ENCODE measurements at regions of chr17 and their contacts with region 1.

Region 1: DNA sequence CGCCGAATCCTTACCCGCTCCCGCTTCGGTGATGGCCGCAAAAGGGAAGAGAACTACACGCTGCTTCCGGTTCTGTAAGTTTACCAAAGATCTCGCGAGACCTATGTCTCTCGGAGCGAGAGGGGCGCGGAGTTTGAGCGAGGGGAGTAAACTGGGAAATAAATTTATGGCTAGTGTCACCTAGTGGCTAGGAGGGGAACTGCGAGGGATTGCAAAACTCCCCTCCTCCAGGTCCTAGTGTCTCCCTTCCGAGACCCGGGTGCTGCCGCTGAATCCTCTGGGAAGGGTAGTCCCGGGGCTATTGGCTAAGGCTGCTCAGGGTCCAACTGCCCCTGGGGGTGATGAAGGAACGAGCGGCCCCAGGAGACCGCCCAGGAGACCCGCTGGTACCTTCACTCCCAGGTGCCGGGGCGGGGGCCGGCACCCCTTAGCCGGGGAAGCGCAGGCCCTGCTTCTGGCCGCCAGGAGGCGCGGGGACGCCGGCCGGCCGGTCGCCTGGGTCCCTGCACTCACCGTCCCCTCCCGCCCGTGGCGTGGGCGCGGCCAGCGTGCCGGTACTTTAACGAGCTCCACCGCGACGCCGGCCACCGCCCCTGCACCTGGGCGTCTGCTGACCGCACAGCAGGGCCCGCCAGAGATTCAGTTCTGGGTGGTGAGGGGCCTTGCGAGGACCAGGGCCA is at the start of gene RPL26:
- DNase-seq: peak; percentile 94 to 99
- H3K4me3 ChIP-seq: peak within 1 kb of the TSS; percentile 93 to 95
- H3K27ac ChIP-seq: peak within 1 kb of the TSS; percentile 76 to 81
- H3K4me1 ChIP-seq: peaks cover 11 to 19% of the 10 kb centered on the region in 2 donors
- H3K27me3 ChIP-seq: no peaks in the 10 kb centered on the region
- CTCF ChIP-seq: peak; percentile 96 to 99 (median 97)
- total RNA-seq, gene RPL26: 1,547 TPM

Region 2: GRCh38 chr17:8041249-8041928 is 341.9 kb before region 1 on chr17:
- intact Hi-C with region 1: no loop called
- DNase-seq: no peak
- H3K4me3 ChIP-seq: no peak overlapping the region
- H3K27ac ChIP-seq: peak overlapping the region in 1 of 2 donors; percentile 15
- H3K4me1 ChIP-seq: no peaks in the 10 kb centered on the region
- H3K27me3 ChIP-seq: peaks cover 10% of the 10 kb centered on the region
- CTCF ChIP-seq: peak in 2 of 3 experiments; percentile 27 to 38

Region 3: DNA sequence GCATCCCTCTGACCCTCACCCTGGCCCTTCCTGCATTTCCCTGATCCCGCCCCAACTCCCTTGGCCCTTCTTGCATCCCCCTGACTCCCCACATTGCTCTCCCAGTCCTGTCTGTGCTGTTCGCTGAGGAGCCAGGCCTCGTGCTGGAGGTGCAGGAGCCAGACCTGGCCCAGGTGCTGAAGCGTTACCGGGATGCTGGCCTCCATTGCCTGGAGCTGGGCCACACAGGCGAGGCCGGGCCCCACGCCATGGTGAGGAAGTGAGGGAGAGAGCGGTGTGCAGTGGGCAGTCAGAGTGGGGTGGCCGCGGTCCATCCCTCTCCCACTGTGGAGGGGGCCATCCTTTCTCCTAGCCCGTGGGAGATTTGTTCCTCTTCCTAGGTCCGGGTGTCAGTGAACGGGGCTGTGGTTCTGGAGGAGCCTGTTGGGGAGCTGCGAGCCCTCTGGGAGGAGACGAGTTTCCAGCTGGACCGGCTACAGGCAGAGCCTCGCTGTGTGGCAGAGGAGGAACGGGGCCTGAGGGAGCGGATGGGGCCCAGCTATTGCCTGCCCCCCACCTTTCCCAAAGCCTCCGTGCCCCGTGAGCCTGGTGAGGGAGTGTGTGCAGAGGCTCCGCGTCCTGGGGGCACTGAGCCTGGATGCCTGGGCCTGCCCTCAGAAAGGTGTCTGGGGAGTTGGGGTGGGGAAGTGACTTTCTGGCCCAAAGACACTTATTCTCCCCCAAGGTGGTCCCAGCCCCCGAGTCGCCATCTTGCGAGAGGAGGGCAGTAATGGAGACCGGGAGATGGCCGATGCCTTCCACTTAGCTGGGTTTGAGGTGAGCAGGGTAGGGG is 116.4 kb before region 1 on chr17:
- intact Hi-C with region 1: no loop called
- DNase-seq: no peak
- H3K4me3 ChIP-seq: no peak overlapping the region
- H3K27ac ChIP-seq: no peak overlapping the region
- H3K4me1 ChIP-seq: no peaks in the 10 kb centered on the region
- H3K27me3 ChIP-seq: no peaks in the 10 kb centered on the region
- CTCF ChIP-seq: no peak

Region 4: GRCh38 chr17:8359769-8360168 is 23.5 kb before region 1 on chr17:
- intact Hi-C with region 1: no loop called
- DNase-seq: no peak
- H3K4me3 ChIP-seq: no peak overlapping the region
- H3K27ac ChIP-seq: no peak overlapping the region
- H3K4me1 ChIP-seq: no peaks in the 10 kb centered on the region
- H3K27me3 ChIP-seq: no peaks in the 10 kb centered on the region
- CTCF ChIP-seq: no peak

Region 5: GRCh38 chr17:8435245-8436168 is 52.2 kb after region 1 on chr17 and contains the start of gene NDEL1:
- intact Hi-C with region 1: loop called (anchors 2 kb)
- DNase-seq: peak; percentile 96 to 99
- H3K4me3 ChIP-seq: peak within 1 kb of the TSS; percentile 73 to 96
- H3K27ac ChIP-seq: peak within 1 kb of the TSS; percentile 95 to 100
- H3K4me1 ChIP-seq: peaks cover 15 to 38% of the 10 kb centered on the region in 2 donors
- H3K27me3 ChIP-seq: no peaks in the 10 kb centered on the region
- CTCF ChIP-seq: no peak
- total RNA-seq, gene NDEL1: 103 TPM

Region 6: GRCh38 chr17:8785547-8786413 is 402.5 kb after region 1 on chr17:
- intact Hi-C with region 1: loop called (anchors 10 kb)
- DNase-seq: peak; percentile 36 to 93
- H3K4me3 ChIP-seq: peak overlapping the region in 1 of 2 donors; percentile 10
- H3K27ac ChIP-seq: peak overlapping the region; percentile 3 to 32
- H3K4me1 ChIP-seq: peaks cover 0 to 8% of the 10 kb centered on the region in 2 donors
- H3K27me3 ChIP-seq: no peaks in the 10 kb centered on the region
- CTCF ChIP-seq: peak; percentile 80 to 84 (median 80)

Region 7: GRCh38 chr17:8894673-8895578 is 511.6 kb after region 1 on chr17:
- intact Hi-C with region 1: loop called (anchors 10 kb)
- DNase-seq: peak in 1 of 2 donors; percentile 68
- H3K4me3 ChIP-seq: peak overlapping the region in 1 of 2 donors; percentile 8
- H3K27ac ChIP-seq: no peak overlapping the region
- H3K4me1 ChIP-seq: peaks cover 0 to 4% of the 10 kb centered on the region in 2 donors
- H3K27me3 ChIP-seq: no peaks in the 10 kb centered on the region
- CTCF ChIP-seq: peak; percentile 65 to 77 (median 72)